Lower leg skin (tissue), 4 donors: ENCODE measurements at regions of chr6 and their contacts with region 1.

Region 1: GRCh38 chr6:161044335-161044734 is 52.8 kb downstream of the MAP3K4 start:
- DNase-seq: no peak
- H3K4me3 ChIP-seq: no peak overlapping the region
- CTCF ChIP-seq: no peak
- POLR2A ChIP-seq: no peak

Region 2: DNA sequence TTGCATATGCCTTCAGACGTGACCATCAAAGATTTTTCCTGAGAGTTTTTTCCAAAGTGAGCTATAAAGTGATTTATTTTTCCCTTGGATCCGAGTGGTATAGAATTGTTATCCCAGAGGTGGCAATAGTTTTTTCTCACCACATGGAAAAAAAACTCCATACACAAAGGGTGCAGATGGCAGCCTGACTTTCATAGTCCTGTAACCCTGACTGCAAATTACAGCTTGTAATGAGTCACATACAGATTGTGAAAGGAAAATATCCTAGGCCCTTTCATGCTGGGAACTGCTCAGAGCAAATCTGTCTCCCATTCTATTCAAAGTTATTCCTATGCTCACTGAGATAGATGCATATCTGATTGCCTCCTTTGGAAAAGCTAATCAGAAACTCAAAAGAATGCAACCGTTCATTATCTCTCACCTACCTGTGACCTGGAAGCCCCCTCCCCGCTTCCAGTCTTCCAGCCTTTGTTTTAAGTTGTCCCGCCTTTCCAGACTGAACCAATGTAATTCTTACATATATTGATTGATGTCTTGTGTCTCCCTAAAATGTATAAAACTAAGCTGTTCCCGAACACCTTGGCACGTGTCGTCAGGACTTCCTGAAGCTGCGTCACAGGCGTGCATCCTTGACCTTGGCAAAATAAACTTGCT is 161.5 kb before region 1 on chr6:
- intact Hi-C with region 1: loop called (anchors 5 kb)
- DNase-seq: no peak
- H3K4me3 ChIP-seq: no peak overlapping the region
- CTCF ChIP-seq: no peak
- POLR2A ChIP-seq: no peak